RWPE1 (cell line): ENCODE measurements at regions of chr12 and their contacts with region 1.

Region 1: DNA sequence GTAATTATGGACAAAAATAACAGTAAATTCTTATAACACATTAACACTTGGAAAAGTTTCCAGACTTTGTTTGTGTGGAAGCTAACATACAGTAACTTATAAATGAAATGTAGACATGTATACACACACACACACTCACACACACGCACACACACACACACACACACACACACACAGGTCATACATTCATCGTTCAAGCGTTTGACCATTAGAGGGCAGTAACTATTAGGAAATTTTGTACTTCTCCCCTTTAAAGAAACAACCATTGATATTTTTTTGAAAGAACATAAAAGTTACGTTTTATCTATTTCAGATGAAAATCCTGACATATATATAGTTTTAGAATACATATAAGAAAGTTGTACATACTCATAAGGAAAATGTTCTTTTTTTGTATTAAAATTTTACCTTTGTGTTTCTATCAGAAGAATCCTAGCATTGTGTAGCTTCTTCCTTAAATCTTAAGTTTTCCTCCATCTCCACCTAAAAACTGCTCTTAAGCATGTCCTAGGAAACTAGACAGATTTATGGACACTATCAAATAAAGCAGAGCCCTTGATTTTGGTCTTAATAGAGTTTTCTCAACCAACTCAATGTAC is 29.0 kb downstream of the PTPRQ start:
- DNase-seq: peak; percentile 24
- H3K27ac ChIP-seq: no peak overlapping the region
- CTCF ChIP-seq: peak; percentile 59

Region 2: GRCh38 chr12:80456513-80456912 is 16.5 kb before region 1 on chr12:
- CTCF ChIA-PET with region 1: no interaction called
- POLR2A ChIA-PET with region 1: no interaction called
- DNase-seq: no peak
- H3K27ac ChIP-seq: no peak overlapping the region
- CTCF ChIP-seq: no peak

Region 3: GRCh38 chr12:80598004-80598606 is 125.1 kb after region 1 on chr12:
- CTCF ChIA-PET with region 1: interaction called, 12 read pairs
- POLR2A ChIA-PET with region 1: no interaction called
- DNase-seq: peak; percentile 52
- H3K27ac ChIP-seq: no peak overlapping the region
- CTCF ChIP-seq: peak; percentile 66